Activated CD4-positive, alpha-beta T cell treated with anti-CD3 and anti-CD28 coated beads for 36 hours (primary cell): ENCODE measurements at regions of chr3 and their contacts with region 1.

Region 1: GRCh38 chr3:183884427-183885296 is at the start of gene PARL:
- DNase-seq: peak; percentile 98
- ATAC-seq: peak; percentile 100
- H3K4me3 Mint-ChIP-seq: peak within 1 kb of the TSS; percentile 94
- H3K27ac Mint-ChIP-seq: peak within 1 kb of the TSS; percentile 94
- H3K4me1 Mint-ChIP-seq: peaks cover 32% of the 10 kb centered on the region
- H3K27me3 Mint-ChIP-seq: no peaks in the 10 kb centered on the region
- total RNA-seq, gene PARL: 55.9 to 91.9 TPM

Region 2: GRCh38 chr3:183392186-183393034 is 492.3 kb before region 1 on chr3:
- CTCF ChIA-PET with region 1: no interaction called
- POLR2A ChIA-PET with region 1: no interaction called
- intact Hi-C with region 1: loop called in 1 of 2 experiments (anchors 5 kb)
- DNase-seq: no peak
- ATAC-seq: no peak
- H3K4me3 Mint-ChIP-seq: no peak overlapping the region
- H3K27ac Mint-ChIP-seq: no peak overlapping the region
- H3K4me1 Mint-ChIP-seq: peaks cover 2% of the 10 kb centered on the region
- H3K27me3 Mint-ChIP-seq: no peaks in the 10 kb centered on the region

Region 3: GRCh38 chr3:183468424-183468823 is 416.2 kb before region 1 on chr3:
- CTCF ChIA-PET with region 1: interaction called, 5 read pairs
- POLR2A ChIA-PET with region 1: no interaction called
- intact Hi-C with region 1: loop called (anchors 1 to 2 kb)
- DNase-seq: no peak
- ATAC-seq: peak; percentile 77
- H3K4me3 Mint-ChIP-seq: no peak overlapping the region
- H3K27ac Mint-ChIP-seq: peak overlapping the region; percentile 84
- H3K4me1 Mint-ChIP-seq: peaks cover 26% of the 10 kb centered on the region
- H3K27me3 Mint-ChIP-seq: no peaks in the 10 kb centered on the region

Region 4: GRCh38 chr3:183895296-183895695 is 10.6 kb after region 1 on chr3:
- CTCF ChIA-PET with region 1: interaction called, 35 read pairs
- POLR2A ChIA-PET with region 1: no interaction called
- intact Hi-C with region 1: no loop called
- DNase-seq: peak; percentile 38
- ATAC-seq: peak; percentile 59
- H3K4me3 Mint-ChIP-seq: no peak overlapping the region
- H3K27ac Mint-ChIP-seq: no peak overlapping the region
- H3K4me1 Mint-ChIP-seq: no peaks in the 10 kb centered on the region
- H3K27me3 Mint-ChIP-seq: peaks cover 7% of the 10 kb centered on the region

Region 5: GRCh38 chr3:184135149-184135910 is 250.7 kb after region 1 on chr3 and contains the start of gene EIF2B5:
- CTCF ChIA-PET with region 1: interaction called, 3 read pairs
- POLR2A ChIA-PET with region 1: no interaction called
- intact Hi-C with region 1: loop called in 1 of 2 experiments (anchors 1 kb)
- DNase-seq: peak; percentile 93
- ATAC-seq: peak; percentile 90
- H3K4me3 Mint-ChIP-seq: peak within 1 kb of the TSS; percentile 97
- H3K27ac Mint-ChIP-seq: peak within 1 kb of the TSS; percentile 92
- H3K4me1 Mint-ChIP-seq: peaks cover 29% of the 10 kb centered on the region
- H3K27me3 Mint-ChIP-seq: no peaks in the 10 kb centered on the region
- total RNA-seq, gene EIF2B5: 46.4 to 60.6 TPM

Region 6: DNA sequence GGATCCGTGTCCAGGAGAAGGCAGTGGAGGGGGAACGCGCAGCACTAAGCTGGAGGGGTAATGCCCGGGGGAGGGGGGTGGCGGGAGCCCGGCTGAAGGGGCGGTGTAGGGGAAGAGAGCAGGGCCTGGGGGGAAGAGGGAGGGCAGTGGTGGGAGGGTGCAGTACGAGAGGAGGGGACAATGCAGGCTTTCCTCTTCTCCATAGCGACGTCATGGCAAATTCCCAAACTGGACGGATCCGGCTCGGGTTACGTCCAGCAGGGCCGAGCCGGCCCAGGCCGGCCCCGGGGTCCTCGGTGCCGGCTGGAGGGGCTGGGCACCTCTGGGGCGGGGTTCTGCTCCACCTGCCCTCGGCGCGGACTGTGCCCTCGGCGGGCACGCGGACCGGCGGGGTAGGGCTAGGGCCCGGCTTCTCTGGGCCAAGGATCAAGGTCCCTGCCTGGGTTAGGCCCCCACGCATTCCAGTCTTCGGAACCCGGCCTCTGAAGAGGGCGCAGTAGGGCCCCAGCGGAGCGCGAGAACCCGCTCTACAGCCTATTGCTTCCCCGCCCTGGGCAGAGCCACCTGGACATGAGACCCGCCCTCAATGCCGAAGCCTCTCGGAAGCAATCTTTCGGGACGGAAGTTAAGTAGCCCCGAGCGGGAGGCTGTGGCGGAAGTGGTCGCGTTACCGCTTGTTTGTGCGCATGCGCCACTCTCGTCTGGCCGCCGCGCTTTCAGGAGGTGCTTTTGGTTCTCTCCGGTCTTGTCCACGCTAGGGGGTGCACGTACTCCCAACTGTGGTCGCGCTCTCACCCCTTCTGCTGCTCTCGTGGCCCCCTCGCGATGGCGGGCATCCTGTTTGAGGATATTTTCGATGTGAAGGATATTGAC is 478.2 kb after region 1 on chr3:
- CTCF ChIA-PET with region 1: no interaction called
- POLR2A ChIA-PET with region 1: no interaction called
- intact Hi-C with region 1: loop called in 1 of 2 experiments (anchors 1 kb)
- DNase-seq: peak; percentile 97
- ATAC-seq: peak; percentile 91
- H3K4me3 Mint-ChIP-seq: peak overlapping the region; percentile 98
- H3K27ac Mint-ChIP-seq: peak overlapping the region; percentile 98
- H3K4me1 Mint-ChIP-seq: peaks cover 30% of the 10 kb centered on the region
- H3K27me3 Mint-ChIP-seq: no peaks in the 10 kb centered on the region